Right ventricle myocardium inferior (tissue), 1 donor: ENCODE measurements at regions of chr7 and their contacts with region 1.

Region 1: DNA sequence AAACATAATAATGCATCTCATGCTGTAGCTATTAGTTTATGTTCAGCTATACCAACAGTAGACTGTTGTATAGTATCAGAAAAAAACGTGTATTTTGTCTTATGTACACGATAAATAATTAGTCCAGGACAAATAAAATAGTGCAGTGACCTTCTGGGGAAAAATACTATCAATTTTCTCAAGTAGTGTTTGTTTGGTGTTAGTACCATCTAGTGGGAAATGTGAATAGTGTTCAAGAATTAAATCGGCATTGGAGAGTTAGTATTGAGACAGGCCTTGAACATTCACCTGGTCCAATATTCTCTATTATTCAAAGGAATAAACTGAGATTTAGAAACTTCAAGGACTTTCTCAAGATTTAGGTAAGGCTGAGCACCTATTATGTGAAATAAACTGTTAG is 21.7 kb upstream of the OR2A5 start:
- DNase-seq: no peak
- ATAC-seq: no peak

Region 2: DNA sequence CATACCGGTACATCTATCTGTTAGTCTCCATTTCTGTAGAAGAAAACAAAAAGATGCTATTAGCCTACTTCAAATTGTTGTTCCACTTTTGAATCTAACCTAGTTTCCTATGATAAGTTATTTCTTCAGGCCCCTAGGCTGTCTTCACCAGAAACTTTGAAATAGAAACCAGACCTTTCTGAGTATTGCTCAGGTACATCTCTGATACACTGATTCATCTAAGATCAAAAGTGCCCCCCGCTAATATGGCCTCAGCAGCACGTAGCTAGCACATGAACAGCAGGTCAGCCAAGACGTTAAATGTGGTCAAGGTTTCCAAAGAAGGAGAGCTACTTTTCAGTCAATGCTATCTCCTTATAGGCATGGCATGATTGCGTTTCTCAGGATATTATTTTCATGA is 293.2 kb before region 1 on chr7:
- intact Hi-C with region 1: loop called (anchors 5 kb)
- DNase-seq: no peak
- ATAC-seq: no peak

Region 3: DNA sequence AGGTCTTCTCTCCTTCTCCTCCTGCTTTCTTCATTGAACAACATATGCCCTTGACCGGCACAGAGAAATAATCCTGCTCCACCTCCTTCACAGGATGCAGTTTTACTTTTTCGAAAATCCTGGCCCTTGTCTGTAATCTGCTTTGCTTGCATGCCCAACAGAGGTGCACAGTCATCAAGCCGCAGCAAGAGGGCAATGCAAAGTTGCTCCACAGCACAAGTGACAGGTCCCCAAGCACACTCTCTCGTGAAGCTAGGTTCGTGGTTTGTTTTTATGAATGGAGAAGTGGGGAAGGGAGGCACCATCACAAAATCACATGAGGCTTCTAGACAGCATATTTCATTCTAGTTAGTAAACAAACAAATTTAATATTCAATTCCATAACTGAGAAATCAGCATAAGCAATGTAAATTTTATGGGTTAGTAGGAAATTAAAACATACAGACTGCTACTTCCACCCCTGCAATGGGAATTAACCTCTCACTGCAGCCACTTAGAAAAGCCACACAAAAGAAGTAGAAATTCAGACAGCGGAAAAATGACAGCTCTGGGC is 630.0 kb after region 1 on chr7:
- intact Hi-C with region 1: no loop called
- DNase-seq: no peak
- ATAC-seq: no peak